HCT116 (cell line): ENCODE measurements at regions of chr11 and their contacts with region 1.

Region 1: GRCh38 chr11:62841361-62842184 is 2.2 kb upstream of the WDR74 start:
- DNase-seq: peak; percentile 99
- ATAC-seq: peak; percentile 79
- H3K4me3 ChIP-seq: peak overlapping the region in 1 of 2 experiments; percentile 15; a peak in 2 of 4 replicates
- H3K27ac ChIP-seq: peak overlapping the region; percentile 94
- H3K4me1 ChIP-seq: peaks cover 8 to 36% of the 10 kb centered on the region in 2 experiments; a peak in 3 of 4 replicates
- H3K27me3 ChIP-seq: no peaks in the 10 kb centered on the region
- CTCF ChIP-seq: no peak
- POLR2A ChIP-seq: peak; percentile 100
- RAD21 ChIP-seq: no peak

Region 2: GRCh38 chr11:62591448-62592145 is 250.0 kb before region 1 on chr11 and contains the start of gene TUT1:
- CTCF ChIA-PET with region 1: interaction called, 3 read pairs
- POLR2A ChIA-PET with region 1: interaction called, 30 read pairs
- RAD21 ChIA-PET with region 1: no interaction called
- intact Hi-C with region 1: no loop called
- DNase-seq: peak; percentile 99
- ATAC-seq: peak; percentile 90
- H3K4me3 ChIP-seq: peak within 1 kb of the TSS; percentile 78 to 97
- H3K27ac ChIP-seq: peak within 1 kb of the TSS; percentile 77
- H3K4me1 ChIP-seq: peaks cover 21 to 36% of the 10 kb centered on the region in 2 experiments
- H3K27me3 ChIP-seq: no peaks in the 10 kb centered on the region
- CTCF ChIP-seq: no peak
- POLR2A ChIP-seq: peak; percentile 97
- RAD21 ChIP-seq: no peak
- total RNA-seq, gene TUT1: 49.0 TPM

Region 3: GRCh38 chr11:62726915-62727763 is 114.4 kb before region 1 on chr11 and contains the start of gene HNRNPUL2:
- CTCF ChIA-PET with region 1: no interaction called
- POLR2A ChIA-PET with region 1: interaction called, 59 read pairs
- RAD21 ChIA-PET with region 1: no interaction called
- intact Hi-C with region 1: loop called (anchors 2 kb)
- DNase-seq: peak; percentile 98
- ATAC-seq: peak; percentile 84
- H3K4me3 ChIP-seq: peak within 1 kb of the TSS; percentile 98 to 100
- H3K27ac ChIP-seq: peak within 1 kb of the TSS; percentile 96
- H3K4me1 ChIP-seq: peaks cover 14 to 25% of the 10 kb centered on the region in 2 experiments
- H3K27me3 ChIP-seq: no peaks in the 10 kb centered on the region
- CTCF ChIP-seq: no peak
- POLR2A ChIP-seq: peak; percentile 79
- RAD21 ChIP-seq: no peak
- total RNA-seq, gene HNRNPUL2: 45.8 TPM

Region 4: DNA sequence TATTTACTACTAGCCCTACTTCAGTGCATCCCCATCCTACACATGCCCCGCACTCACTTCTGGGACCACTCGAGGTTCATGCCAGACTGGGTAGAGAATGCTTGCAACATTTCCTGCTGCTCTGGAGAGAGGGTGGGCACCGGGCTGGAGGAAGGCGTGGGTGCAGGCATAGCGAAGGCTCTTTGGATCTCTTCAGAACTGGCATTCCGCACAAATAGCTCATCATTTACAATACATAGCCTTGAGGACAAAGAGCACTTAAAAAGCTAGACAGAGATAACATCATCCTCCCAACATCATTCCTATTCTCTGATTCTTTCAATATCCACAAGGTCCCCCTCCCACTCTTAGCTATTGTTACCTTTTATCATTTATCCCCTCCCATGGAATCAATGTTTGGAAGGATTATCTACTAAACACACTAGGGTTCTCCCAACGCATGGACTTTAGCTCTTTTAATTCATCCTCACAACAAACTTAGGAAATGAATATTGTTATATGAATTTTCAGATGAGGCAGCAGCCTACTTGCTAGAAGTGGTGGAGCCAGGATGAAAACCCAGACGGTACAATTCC is 47.3 kb before region 1 on chr11:
- CTCF ChIA-PET with region 1: no interaction called
- POLR2A ChIA-PET with region 1: interaction called, 82 read pairs
- RAD21 ChIA-PET with region 1: no interaction called
- intact Hi-C with region 1: no loop called
- DNase-seq: no peak
- ATAC-seq: no peak
- H3K4me3 ChIP-seq: no peak overlapping the region
- H3K27ac ChIP-seq: no peak overlapping the region
- H3K4me1 ChIP-seq: peaks cover 15 to 27% of the 10 kb centered on the region in 2 experiments; a peak in 3 of 4 replicates
- H3K27me3 ChIP-seq: no peaks in the 10 kb centered on the region
- CTCF ChIP-seq: no peak
- POLR2A ChIP-seq: no peak
- RAD21 ChIP-seq: no peak

Region 5: GRCh38 chr11:62860835-62861563 is 19.4 kb after region 1 on chr11:
- CTCF ChIA-PET with region 1: interaction called, 8 read pairs
- POLR2A ChIA-PET with region 1: interaction called, 343 read pairs
- RAD21 ChIA-PET with region 1: no interaction called
- intact Hi-C with region 1: no loop called
- DNase-seq: no peak
- ATAC-seq: no peak
- H3K4me3 ChIP-seq: no peak overlapping the region
- H3K27ac ChIP-seq: peak overlapping the region; percentile 44; the same call in 1 of the 2 replicates
- H3K4me1 ChIP-seq: peaks cover 25 to 38% of the 10 kb centered on the region in 2 experiments
- H3K27me3 ChIP-seq: no peaks in the 10 kb centered on the region
- CTCF ChIP-seq: no peak
- POLR2A ChIP-seq: no peak
- RAD21 ChIP-seq: no peak

Region 6: DNA sequence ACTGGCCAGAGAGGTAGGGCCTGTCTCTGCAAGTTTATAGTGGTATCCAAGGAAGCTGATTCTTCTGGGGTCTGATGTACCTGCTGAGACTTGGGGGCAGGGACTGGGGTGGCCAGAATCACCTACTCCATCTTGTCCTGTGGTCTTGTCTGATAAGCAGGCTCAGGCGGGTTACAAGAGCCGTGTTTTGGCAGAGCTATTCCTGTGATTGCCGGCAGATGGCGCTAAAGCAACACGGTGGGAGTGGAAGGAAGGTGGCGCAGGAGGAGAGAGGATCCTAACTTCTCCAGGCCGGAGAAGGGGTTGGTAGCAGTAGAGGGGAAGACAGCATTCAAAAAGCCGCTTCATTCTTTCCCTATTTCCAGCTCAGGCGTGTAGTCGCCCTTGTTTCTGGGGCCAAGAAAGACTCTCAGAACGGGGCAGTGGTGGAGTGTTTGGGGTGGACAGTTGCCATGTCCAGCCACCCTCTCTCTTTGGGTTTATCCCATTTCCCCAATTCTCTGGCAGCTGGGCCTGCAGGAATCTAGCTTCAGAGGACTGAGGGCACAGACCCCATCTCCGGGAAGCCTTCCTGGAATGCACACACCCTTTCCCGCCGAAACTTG is 64.5 kb after region 1 on chr11:
- CTCF ChIA-PET with region 1: no interaction called
- POLR2A ChIA-PET with region 1: interaction called, 10 read pairs
- RAD21 ChIA-PET with region 1: interaction called in 1 of 2 experiments, 5 read pairs
- intact Hi-C with region 1: no loop called
- DNase-seq: peak; percentile 73
- ATAC-seq: peak; percentile 86
- H3K4me3 ChIP-seq: no peak overlapping the region
- H3K27ac ChIP-seq: no peak overlapping the region
- H3K4me1 ChIP-seq: peaks cover 9 to 18% of the 10 kb centered on the region in 2 experiments; a peak in 3 of 4 replicates
- H3K27me3 ChIP-seq: no peaks in the 10 kb centered on the region
- CTCF ChIP-seq: peak; percentile 97 to 100 (median 98)
- POLR2A ChIP-seq: no peak
- RAD21 ChIP-seq: peak; percentile 98

Region 7: GRCh38 chr11:62922658-62923431 is 81.3 kb after region 1 on chr11:
- CTCF ChIA-PET with region 1: no interaction called
- POLR2A ChIA-PET with region 1: no interaction called
- RAD21 ChIA-PET with region 1: no interaction called
- intact Hi-C with region 1: no loop called
- DNase-seq: no peak
- ATAC-seq: 0 out of 2 replicates have a peak, but pooled peaks have one; percentile 9
- H3K4me3 ChIP-seq: no peak overlapping the region
- H3K27ac ChIP-seq: no peak overlapping the region
- H3K4me1 ChIP-seq: peaks cover 7 to 17% of the 10 kb centered on the region in 2 experiments
- H3K27me3 ChIP-seq: no peaks in the 10 kb centered on the region; the same call in 1 of the 2 replicates
- CTCF ChIP-seq: peak in 2 of 3 experiments; percentile 46 to 60; a peak in 4 of 6 replicates
- POLR2A ChIP-seq: no peak
- RAD21 ChIP-seq: no peak